ENCODE measurements at regions of chr17 and their contacts with region 1.

Region 1: GRCh38 chr17:58303971-58304725 is 23.4 kb upstream of the MPO start:
- DNase-seq: peak; percentile 72
- ATAC-seq: peak; percentile 76
- H3K4me3 Mint-ChIP-seq: no peak overlapping the region
- H3K27ac Mint-ChIP-seq: no peak overlapping the region
- H3K4me1 Mint-ChIP-seq: peaks cover 2% of the 10 kb centered on the region
- H3K27me3 Mint-ChIP-seq: peaks cover 3% of the 10 kb centered on the region

Region 2: DNA sequence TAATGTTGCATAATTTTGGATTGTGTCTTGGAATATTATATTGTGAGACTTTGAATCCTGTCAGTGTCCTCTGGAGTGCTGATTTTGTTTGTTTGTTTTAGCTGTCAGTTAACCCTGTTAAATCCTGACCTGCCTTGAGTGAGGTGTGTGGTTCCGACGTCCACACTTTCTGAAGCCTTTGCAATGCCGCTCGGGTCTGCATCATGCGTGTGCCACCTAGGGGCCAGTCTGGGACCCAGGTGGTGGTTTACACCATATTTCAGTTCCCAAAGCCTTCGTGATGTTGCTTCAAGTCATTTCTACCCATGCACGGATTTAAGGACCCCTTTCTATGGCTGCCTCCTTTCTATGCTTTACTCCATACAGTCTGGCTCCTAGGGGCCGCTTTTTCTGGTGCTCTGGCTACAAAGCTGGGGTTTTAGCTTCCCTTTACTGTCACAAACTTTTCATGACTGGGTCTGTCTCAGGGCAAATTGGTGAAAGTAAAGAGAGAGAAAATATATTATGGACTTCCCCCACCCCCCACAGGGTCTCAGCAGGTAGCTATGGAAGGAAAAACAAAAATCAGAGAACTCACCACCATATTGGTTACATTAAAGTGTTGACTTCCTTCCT is 167.4 kb before region 1 on chr17:
- CTCF ChIA-PET with region 1: no interaction called
- DNase-seq: no peak
- ATAC-seq: no peak
- H3K4me3 Mint-ChIP-seq: no peak overlapping the region
- H3K27ac Mint-ChIP-seq: no peak overlapping the region
- H3K4me1 Mint-ChIP-seq: no peaks in the 10 kb centered on the region
- H3K27me3 Mint-ChIP-seq: peaks cover 44% of the 10 kb centered on the region

Region 3: GRCh38 chr17:58344047-58344790 is 40.1 kb after region 1 on chr17:
- CTCF ChIA-PET with region 1: interaction called, 14 read pairs
- DNase-seq: peak; percentile 97
- ATAC-seq: peak; percentile 75
- H3K4me3 Mint-ChIP-seq: peak overlapping the region; percentile 83
- H3K27ac Mint-ChIP-seq: peak overlapping the region; percentile 98
- H3K4me1 Mint-ChIP-seq: peaks cover 87% of the 10 kb centered on the region
- H3K27me3 Mint-ChIP-seq: no peaks in the 10 kb centered on the region

Region 4: DNA sequence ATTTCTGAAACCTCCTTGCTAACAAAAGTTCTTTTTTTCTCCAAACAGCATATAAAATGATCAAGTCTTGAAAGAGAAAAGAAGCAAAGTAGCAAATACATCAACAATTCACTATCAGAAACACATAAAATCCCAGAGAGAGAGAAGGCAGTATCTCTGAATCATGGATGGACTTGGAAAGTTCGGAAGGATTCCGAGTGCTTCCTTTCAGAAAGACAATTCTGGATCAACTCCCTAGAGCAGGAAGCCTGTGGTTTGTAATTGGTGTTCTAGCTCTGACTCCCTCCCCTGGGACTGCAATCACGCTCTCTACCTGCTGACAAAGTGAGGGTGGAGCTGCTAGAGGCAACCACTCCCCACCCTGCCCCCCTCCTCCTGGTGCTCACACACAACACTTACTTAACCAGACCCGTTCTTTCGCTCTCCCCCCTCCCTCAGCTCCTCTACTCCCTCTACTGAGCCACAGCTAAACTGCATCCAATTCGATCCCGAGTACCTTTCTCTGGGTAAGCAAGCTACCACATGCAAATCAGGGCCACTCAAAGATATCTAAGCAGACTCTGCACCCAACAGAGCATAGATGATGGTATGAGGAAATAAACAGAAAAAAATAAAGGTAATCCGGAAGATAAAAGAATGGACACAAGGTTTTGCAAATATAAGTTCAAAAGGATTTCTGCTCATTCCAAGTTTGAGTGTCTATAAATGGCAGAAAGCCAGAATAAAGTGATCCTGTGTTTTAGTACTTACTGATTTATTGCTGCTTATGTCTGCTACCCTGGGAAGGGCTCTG is 113.3 kb after region 1 on chr17 and contains the start of gene RNF43:
- CTCF ChIA-PET with region 1: interaction called, 15 read pairs
- DNase-seq: peak; percentile 90
- ATAC-seq: peak; percentile 99
- H3K4me3 Mint-ChIP-seq: no peak within 1 kb of the TSS
- H3K27ac Mint-ChIP-seq: no peak within 1 kb of the TSS
- H3K4me1 Mint-ChIP-seq: peaks cover 24% of the 10 kb centered on the region
- H3K27me3 Mint-ChIP-seq: peaks cover 2% of the 10 kb centered on the region
- total RNA-seq, gene RNF43: 0.23 to 0.52 TPM

Region 5: GRCh38 chr17:58447039-58447975 is 143.2 kb after region 1 on chr17:
- CTCF ChIA-PET with region 1: interaction called, 14 read pairs
- DNase-seq: peak; percentile 86
- ATAC-seq: peak; percentile 97
- H3K4me3 Mint-ChIP-seq: no peak overlapping the region
- H3K27ac Mint-ChIP-seq: no peak overlapping the region
- H3K4me1 Mint-ChIP-seq: peaks cover 5% of the 10 kb centered on the region
- H3K27me3 Mint-ChIP-seq: no peaks in the 10 kb centered on the region

Region 6: DNA sequence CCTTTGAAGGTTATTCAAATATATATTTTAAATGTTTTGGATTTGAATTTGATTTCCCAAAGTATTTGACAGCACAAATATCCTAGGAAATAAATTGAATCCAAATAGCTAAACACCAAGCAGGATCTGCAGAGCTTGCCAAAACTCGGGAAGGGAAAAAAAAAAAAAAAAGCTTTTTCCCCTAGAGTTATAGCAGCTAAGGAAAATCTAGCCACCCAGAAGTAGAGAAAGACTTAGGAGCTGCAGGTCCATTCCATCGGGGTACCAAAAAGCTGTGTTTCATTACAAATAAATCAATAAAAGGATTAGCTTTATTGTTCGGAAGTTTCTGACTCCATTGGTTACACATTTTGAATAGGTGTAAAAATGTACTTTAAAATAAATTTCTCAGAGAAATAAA is 164.8 kb after region 1 on chr17:
- CTCF ChIA-PET with region 1: no interaction called
- DNase-seq: no peak
- ATAC-seq: no peak
- H3K4me3 Mint-ChIP-seq: no peak overlapping the region
- H3K27ac Mint-ChIP-seq: no peak overlapping the region
- H3K4me1 Mint-ChIP-seq: no peaks in the 10 kb centered on the region
- H3K27me3 Mint-ChIP-seq: no peaks in the 10 kb centered on the region

Measured in activated CD8-positive, alpha-beta memory T cell treated with anti-CD3 and anti-CD28 coated beads, Interleukin-2, amount 10 ng/mL, durations not matched to agents 7 days and 5 days (primary cell).